ENCODE measurements at regions of chr7 and their contacts with region 1.

Region 1: GRCh38 chr7:138002096-138002827 is 376 bp upstream of the CREB3L2 start:
- DNase-seq: peak; percentile 98
- H3K4me3 Mint-ChIP-seq: peak overlapping the region; percentile 94
- H3K27ac Mint-ChIP-seq: peak overlapping the region; percentile 92
- H3K4me1 Mint-ChIP-seq: peaks cover 38% of the 10 kb centered on the region
- H3K27me3 Mint-ChIP-seq: no peaks in the 10 kb centered on the region

Region 2: DNA sequence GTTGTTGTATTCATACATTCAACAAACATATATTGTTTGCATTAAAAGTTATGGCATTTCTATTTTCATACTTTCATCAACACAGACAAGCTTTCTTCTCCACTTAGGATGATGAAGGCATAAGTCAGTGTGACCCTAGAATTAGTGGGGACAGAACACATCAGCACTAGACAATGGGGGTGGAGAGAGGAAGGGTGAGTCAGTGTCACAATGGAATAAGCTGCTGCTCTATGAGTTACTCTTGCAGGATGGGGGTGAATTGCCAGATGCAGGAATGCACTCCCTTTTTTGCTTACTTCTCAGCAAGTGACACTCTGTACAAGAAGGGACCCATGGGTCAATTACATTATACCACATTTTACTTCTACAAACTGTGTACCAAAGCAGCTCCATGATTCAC is 229.5 kb before region 1 on chr7:
- intact Hi-C with region 1: loop called (anchors 5 kb)
- DNase-seq: no peak
- H3K4me3 Mint-ChIP-seq: peak overlapping the region; percentile 72
- H3K27ac Mint-ChIP-seq: peak overlapping the region; percentile 42
- H3K4me1 Mint-ChIP-seq: peaks cover 11% of the 10 kb centered on the region
- H3K27me3 Mint-ChIP-seq: no peaks in the 10 kb centered on the region

Region 3: GRCh38 chr7:137923380-137923779 is 78.9 kb before region 1 on chr7:
- intact Hi-C with region 1: loop called (anchors 5 kb)
- DNase-seq: no peak
- H3K4me3 Mint-ChIP-seq: no peak overlapping the region
- H3K27ac Mint-ChIP-seq: peak overlapping the region; percentile 7
- H3K4me1 Mint-ChIP-seq: peaks cover 41% of the 10 kb centered on the region
- H3K27me3 Mint-ChIP-seq: no peaks in the 10 kb centered on the region

Region 4: DNA sequence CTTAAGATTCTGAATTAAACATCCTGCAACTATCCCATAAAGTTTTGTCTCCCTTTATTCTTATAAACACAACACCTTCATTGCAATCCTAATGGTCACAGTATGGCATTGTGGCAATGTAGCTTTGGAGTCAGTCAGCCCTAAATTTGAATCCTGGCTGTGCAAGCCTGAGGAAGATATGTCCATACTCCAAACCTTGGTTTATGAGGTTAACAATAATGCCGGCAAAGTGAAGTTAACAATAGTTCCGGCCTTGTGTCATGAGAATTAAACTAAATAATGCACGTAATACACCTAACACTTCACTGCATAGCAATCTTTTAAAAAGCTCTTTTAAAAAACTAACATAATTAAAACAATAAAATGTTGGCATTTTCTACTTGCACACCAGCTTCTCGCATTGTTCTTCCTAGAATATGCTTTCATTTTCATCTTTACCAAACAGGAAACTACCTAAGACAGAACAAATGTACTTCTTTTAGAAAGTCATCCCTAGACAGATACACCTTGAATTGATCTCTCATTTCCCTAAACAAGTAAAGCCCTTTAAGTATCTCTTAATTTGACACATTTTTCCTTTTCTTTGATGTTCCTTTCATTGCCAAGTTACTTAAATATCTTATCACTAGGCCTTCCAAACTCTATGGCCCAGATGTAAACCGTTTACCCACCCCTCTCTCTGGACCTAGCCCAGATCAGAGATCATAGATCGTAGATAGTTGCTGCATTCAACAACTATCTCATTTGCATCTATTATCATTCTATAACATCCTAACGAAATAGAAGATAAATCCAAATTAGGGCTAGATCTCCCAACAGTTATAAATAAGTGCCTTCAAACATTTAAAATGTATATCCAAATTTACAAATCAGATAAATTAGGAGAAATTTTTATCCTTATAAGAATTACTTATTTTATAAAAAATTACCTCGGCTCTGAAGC is 67.0 kb before region 1 on chr7:
- intact Hi-C with region 1: loop called (anchors 1 kb)
- DNase-seq: no peak
- H3K4me3 Mint-ChIP-seq: peak overlapping the region; percentile 81
- H3K27ac Mint-ChIP-seq: peak overlapping the region; percentile 89
- H3K4me1 Mint-ChIP-seq: peaks cover 40% of the 10 kb centered on the region
- H3K27me3 Mint-ChIP-seq: no peaks in the 10 kb centered on the region

Region 5: DNA sequence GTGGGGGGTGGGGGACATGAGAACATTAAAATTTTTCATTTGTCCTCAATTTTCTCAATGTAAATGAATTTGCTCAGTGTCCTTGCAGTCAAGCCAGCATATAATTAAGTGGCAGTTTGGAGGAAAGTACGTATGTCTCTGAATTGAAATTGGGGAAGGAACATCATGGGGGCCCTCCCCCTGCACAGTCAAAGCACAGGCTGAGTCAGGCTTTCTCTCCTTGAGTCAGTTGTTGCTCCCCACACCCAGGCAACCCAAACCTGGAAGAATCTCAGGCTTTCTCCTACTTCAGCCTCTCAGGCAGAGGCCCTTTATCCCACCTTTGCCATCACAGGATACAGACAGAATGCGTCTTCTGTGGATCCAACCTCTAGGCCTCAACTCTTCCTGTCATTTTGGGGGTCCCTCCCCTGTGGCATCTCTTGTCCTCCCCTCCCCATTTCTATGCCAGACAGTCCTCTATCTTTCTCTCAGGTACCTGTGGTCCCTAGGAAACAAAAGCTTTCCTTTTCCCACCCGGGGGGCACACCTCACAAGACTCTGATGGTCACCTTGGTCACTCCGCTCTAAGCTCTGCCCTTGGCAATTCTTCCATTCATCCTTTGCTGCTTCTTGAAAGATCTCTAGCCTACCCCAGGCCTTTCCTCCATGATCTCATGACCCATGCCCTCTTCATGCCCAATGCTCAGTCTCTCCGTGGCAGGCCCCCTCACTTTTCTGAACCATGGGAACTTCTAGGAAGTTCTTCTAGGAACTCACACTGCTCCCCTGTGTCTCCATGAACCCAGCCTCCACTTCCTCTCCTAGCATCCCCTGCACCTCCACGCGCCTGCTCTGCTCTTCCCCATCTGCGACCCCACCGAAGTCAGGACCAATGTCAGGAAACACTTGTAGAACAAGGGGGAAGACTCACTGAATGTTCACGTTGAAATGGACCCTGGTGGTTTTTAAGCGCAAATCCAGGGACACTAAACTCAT is 40.8 kb before region 1 on chr7:
- intact Hi-C with region 1: loop called (anchors 1 kb)
- DNase-seq: no peak
- H3K4me3 Mint-ChIP-seq: no peak overlapping the region
- H3K27ac Mint-ChIP-seq: peak overlapping the region; percentile 5
- H3K4me1 Mint-ChIP-seq: peaks cover 42% of the 10 kb centered on the region
- H3K27me3 Mint-ChIP-seq: no peaks in the 10 kb centered on the region

Region 6: GRCh38 chr7:138875794-138876193 is 873.5 kb after region 1 on chr7:
- intact Hi-C with region 1: loop called (anchors 5 kb)
- DNase-seq: peak; percentile 74
- H3K4me3 Mint-ChIP-seq: no peak overlapping the region
- H3K27ac Mint-ChIP-seq: peak overlapping the region; percentile 74
- H3K4me1 Mint-ChIP-seq: peaks cover 24% of the 10 kb centered on the region
- H3K27me3 Mint-ChIP-seq: no peaks in the 10 kb centered on the region

Region 7: GRCh38 chr7:139118234-139118804 is 1116.1 kb after region 1 on chr7:
- intact Hi-C with region 1: loop called (anchors 10 kb)
- DNase-seq: no peak
- H3K4me3 Mint-ChIP-seq: peak overlapping the region; percentile 45
- H3K27ac Mint-ChIP-seq: peak overlapping the region; percentile 45
- H3K4me1 Mint-ChIP-seq: peaks cover 32% of the 10 kb centered on the region
- H3K27me3 Mint-ChIP-seq: no peaks in the 10 kb centered on the region